ENCODE measurements at regions of chr17 and their contacts with region 1.

Region 1: GRCh38 chr17:45148183-45149036 is at the start of gene HEXIM1:
- DNase-seq: peak; percentile 100
- H3K4me3 ChIP-seq: peak within 1 kb of the TSS; percentile 72 to 98 (median 98)
- H3K27ac ChIP-seq: peak within 1 kb of the TSS; percentile 99
- H3K4me1 ChIP-seq: peaks cover 34% of the 10 kb centered on the region
- H3K27me3 ChIP-seq: no peaks in the 10 kb centered on the region
- CTCF ChIP-seq: no peak
- total RNA-seq, gene HEXIM1: 20.5 to 35.2 TPM

Region 2: GRCh38 chr17:45161019-45161825 is 12.8 kb after region 1 on chr17:
- CTCF ChIA-PET with region 1: interaction called, 3 read pairs
- dilution Hi-C with region 1: no loop called
- in situ Hi-C with region 1: no loop called
- intact Hi-C with region 1: loop called (anchors 1 kb)
- DNase-seq: peak; percentile 100
- H3K4me3 ChIP-seq: peak overlapping the region; percentile 83 to 93 (median 86)
- H3K27ac ChIP-seq: peak overlapping the region; percentile 97
- H3K4me1 ChIP-seq: peaks cover 11% of the 10 kb centered on the region
- H3K27me3 ChIP-seq: no peaks in the 10 kb centered on the region
- CTCF ChIP-seq: no peak

Region 3: GRCh38 chr17:45172454-45173286 is 24.3 kb after region 1 on chr17:
- CTCF ChIA-PET with region 1: interaction called, 25 read pairs
- dilution Hi-C with region 1: no loop called
- in situ Hi-C with region 1: no loop called
- intact Hi-C with region 1: loop called (anchors 1 kb)
- DNase-seq: peak; percentile 96
- H3K4me3 ChIP-seq: peak overlapping the region; percentile 40 to 58 (median 49)
- H3K27ac ChIP-seq: peak overlapping the region; percentile 99
- H3K4me1 ChIP-seq: peaks cover 55% of the 10 kb centered on the region
- H3K27me3 ChIP-seq: no peaks in the 10 kb centered on the region
- CTCF ChIP-seq: peak; percentile 13 to 46

Region 4: DNA sequence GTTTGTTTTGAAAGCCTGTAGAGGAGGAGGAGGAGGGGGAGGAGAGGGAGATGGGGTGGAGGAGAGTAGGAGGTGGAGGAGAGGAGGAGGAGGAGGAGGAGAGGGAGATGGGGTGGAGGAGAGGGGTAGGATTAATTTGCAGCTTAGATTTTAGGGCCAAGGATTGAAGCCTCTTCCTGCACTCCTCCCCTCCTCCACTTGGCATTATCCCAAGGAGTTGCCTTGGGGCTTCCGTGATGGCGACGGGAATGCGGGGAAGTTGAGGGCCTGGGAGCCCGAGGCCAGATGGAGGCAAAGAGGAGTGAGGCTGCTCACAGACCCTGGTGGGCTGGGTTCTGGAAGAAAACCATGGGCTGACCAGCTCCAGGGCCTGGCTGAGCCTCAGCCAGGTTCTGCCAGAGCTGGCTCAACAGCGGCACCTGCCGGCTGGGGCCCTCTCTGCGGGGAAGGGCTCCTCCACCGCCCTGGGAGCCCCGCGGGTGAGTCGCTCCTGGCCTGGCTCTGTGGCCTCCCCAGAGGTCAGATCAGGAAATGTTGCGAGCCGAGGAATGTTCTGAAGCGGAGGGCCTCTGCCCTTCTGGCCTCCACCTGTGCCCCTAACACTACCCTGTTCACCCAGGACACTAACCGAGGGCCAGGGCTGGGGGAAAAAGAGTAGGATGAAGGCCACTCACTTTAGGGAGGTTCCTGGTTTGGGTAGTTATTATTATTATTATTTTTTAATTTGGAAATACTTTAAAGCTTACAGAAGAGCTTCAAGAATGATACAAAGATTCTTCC is 49.3 kb after region 1 on chr17:
- CTCF ChIA-PET with region 1: interaction called, 36 read pairs
- dilution Hi-C with region 1: no loop called
- in situ Hi-C with region 1: loop called (anchors 5 to 10 kb)
- intact Hi-C with region 1: loop called (anchors 1 kb)
- DNase-seq: peak; percentile 78
- H3K4me3 ChIP-seq: peak overlapping the region in 1 of 3 experiments; percentile 20
- H3K27ac ChIP-seq: no peak overlapping the region
- H3K4me1 ChIP-seq: peaks cover 16% of the 10 kb centered on the region
- H3K27me3 ChIP-seq: no peaks in the 10 kb centered on the region
- CTCF ChIP-seq: peak; percentile 93 to 99

Region 5: GRCh38 chr17:45394913-45395568 is 246.6 kb after region 1 on chr17:
- CTCF ChIA-PET with region 1: no interaction called
- dilution Hi-C with region 1: loop called (anchors 10 kb)
- in situ Hi-C with region 1: no loop called
- intact Hi-C with region 1: no loop called
- DNase-seq: peak; percentile 17
- H3K4me3 ChIP-seq: no peak overlapping the region
- H3K27ac ChIP-seq: no peak overlapping the region
- H3K4me1 ChIP-seq: no peaks in the 10 kb centered on the region
- H3K27me3 ChIP-seq: no peaks in the 10 kb centered on the region
- CTCF ChIP-seq: peak; percentile 38 to 61

Region 6: DNA sequence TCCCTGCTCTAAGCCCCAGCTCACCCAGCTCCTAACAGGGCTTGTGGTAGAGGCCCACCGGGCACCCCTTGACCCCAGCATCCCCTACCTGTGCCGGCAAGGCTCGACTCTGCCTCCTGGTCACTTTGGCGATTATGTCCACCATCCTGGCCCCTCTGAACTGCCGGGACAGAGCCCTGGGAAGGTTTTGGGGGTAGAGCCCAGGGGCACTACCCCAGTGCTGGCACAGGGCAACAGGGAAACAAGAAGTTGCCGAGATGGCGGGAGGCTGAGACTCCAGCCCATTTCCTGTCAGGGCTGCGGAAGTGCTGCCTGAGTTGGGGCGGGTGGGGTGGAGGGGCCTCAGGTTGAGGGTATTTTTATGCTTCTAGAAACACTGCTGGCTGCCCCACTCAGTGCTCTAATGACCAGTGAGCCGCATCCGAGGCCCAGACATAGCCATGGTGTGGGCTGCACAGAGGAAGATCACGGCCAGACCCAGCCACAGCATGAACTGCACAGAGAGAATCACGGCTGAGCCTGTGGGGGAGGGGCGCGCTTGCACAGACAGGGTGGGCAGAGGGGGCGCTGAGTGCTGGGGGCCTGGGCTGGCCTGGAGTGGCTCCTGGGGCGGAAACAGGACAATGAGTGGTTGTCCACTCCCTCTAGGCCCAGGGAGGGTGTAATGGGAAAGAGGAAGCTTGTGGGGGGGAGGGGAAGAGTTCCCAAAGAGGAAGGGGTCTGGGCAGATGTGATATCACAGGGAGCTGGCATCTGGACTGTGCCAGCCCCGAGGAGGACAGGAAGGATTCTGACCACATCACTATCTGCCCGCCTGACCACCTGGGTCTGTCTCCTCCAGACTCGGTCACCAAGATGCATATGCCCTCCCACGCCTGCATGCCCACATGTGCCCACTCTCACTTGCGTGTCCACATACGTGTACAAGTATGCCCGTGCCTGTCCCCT is 262.0 kb after region 1 on chr17:
- CTCF ChIA-PET with region 1: interaction called, 10 read pairs
- dilution Hi-C with region 1: no loop called
- in situ Hi-C with region 1: no loop called
- intact Hi-C with region 1: no loop called
- DNase-seq: no peak
- H3K4me3 ChIP-seq: no peak overlapping the region
- H3K27ac ChIP-seq: no peak overlapping the region
- H3K4me1 ChIP-seq: no peaks in the 10 kb centered on the region
- H3K27me3 ChIP-seq: no peaks in the 10 kb centered on the region
- CTCF ChIP-seq: no peak

Measured in mammary epithelial cell (primary cell).